HCT116 (cell line): ENCODE measurements at regions of chr9 and their contacts with region 1.

Region 1: GRCh38 chr9:129610473-129611301 is 10.2 kb downstream of the C9orf50 start:
- DNase-seq: no peak
- ATAC-seq: peak; percentile 43
- H3K4me3 ChIP-seq: peak overlapping the region; percentile 51 to 64
- H3K27ac ChIP-seq: peak overlapping the region; percentile 96
- H3K4me1 ChIP-seq: peaks cover 63 to 87% of the 10 kb centered on the region in 2 experiments
- H3K27me3 ChIP-seq: no peaks in the 10 kb centered on the region
- CTCF ChIP-seq: peak in 2 of 3 experiments; percentile 79 to 85; a peak in 4 of 6 replicates
- POLR2A ChIP-seq: no peak
- RAD21 ChIP-seq: no peak

Region 2: DNA sequence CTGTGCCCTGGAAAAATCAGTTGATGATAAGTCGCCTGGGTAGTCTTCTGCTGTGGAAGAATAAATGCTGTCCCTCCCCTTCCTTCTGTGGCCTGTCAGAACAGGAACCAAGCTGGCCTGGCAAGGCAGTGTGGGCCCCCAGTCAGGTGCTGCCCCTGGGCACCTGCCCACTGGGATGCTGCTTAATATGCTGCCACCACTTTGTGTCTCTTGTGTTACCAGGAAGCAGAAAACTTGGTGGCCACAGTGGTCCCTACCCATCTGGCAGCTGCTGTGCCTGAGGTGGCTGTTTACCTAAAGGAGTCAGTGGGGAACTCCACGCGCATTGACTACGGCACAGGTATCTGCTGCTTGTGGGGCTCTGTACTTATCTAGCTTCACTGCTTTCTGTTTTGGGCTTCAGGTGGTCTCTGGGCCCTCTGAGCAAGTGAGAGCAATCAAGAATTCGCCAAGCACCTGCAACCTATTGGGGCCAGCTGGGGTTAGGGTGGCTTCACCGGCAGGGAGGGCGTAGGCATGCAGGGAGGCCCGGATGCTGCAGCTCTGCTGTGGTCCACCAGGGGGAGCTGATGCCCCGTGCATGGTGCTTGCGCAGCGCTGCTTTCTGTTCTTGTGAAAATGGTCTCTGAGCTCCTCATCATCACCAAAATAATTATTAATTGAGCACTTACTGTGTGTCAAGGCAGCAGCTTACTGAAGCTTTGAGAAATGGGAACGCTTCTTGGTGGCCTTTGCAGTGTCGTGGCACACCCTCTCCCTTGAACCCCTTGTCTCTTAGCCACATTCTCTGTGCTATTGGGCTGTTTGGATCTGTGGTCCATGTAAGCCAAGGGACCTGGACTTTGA is 479.2 kb before region 1 on chr9:
- CTCF ChIA-PET with region 1: interaction called, 13 read pairs
- POLR2A ChIA-PET with region 1: no interaction called
- RAD21 ChIA-PET with region 1: interaction called in 1 of 2 experiments, 4 read pairs
- intact Hi-C with region 1: no loop called
- DNase-seq: peak; percentile 38
- ATAC-seq: peak; percentile 96
- H3K4me3 ChIP-seq: no peak overlapping the region
- H3K27ac ChIP-seq: peak overlapping the region; percentile 32; the same call in 1 of the 2 replicates
- H3K4me1 ChIP-seq: peaks cover 8 to 20% of the 10 kb centered on the region in 2 experiments
- H3K27me3 ChIP-seq: no peaks in the 10 kb centered on the region
- CTCF ChIP-seq: peak in 2 of 3 experiments; percentile 98 to 99; a peak in 4 of 6 replicates
- POLR2A ChIP-seq: no peak
- RAD21 ChIP-seq: no peak

Region 3: GRCh38 chr9:129406278-129407225 is 204.1 kb before region 1 on chr9:
- CTCF ChIA-PET with region 1: no interaction called
- POLR2A ChIA-PET with region 1: no interaction called
- RAD21 ChIA-PET with region 1: no interaction called
- intact Hi-C with region 1: loop called (anchors 5 kb)
- DNase-seq: peak; percentile 73
- ATAC-seq: peak; percentile 88
- H3K4me3 ChIP-seq: peak overlapping the region; percentile 47 to 62
- H3K27ac ChIP-seq: peak overlapping the region; percentile 69
- H3K4me1 ChIP-seq: peaks cover 45 to 80% of the 10 kb centered on the region in 2 experiments
- H3K27me3 ChIP-seq: no peaks in the 10 kb centered on the region
- CTCF ChIP-seq: no peak
- POLR2A ChIP-seq: peak; percentile 80
- RAD21 ChIP-seq: no peak

Region 4: GRCh38 chr9:129495534-129496325 is 115.0 kb before region 1 on chr9:
- CTCF ChIA-PET with region 1: no interaction called
- POLR2A ChIA-PET with region 1: interaction called, 34 read pairs
- RAD21 ChIA-PET with region 1: interaction called in 1 of 2 experiments, 5 read pairs
- intact Hi-C with region 1: no loop called
- DNase-seq: peak; percentile 82
- ATAC-seq: peak; percentile 71
- H3K4me3 ChIP-seq: peak overlapping the region; percentile 62 to 67
- H3K27ac ChIP-seq: peak overlapping the region; percentile 100
- H3K4me1 ChIP-seq: peaks cover 74 to 100% of the 10 kb centered on the region in 2 experiments
- H3K27me3 ChIP-seq: no peaks in the 10 kb centered on the region
- CTCF ChIP-seq: no peak
- POLR2A ChIP-seq: no peak
- RAD21 ChIP-seq: no peak

Region 5: GRCh38 chr9:129569502-129570449 is 40.9 kb before region 1 on chr9:
- CTCF ChIA-PET with region 1: no interaction called
- POLR2A ChIA-PET with region 1: interaction called, 18 read pairs
- RAD21 ChIA-PET with region 1: interaction called in 1 of 2 experiments, 4 read pairs
- intact Hi-C with region 1: loop called (anchors 2 kb)
- DNase-seq: peak; percentile 81
- ATAC-seq: peak; percentile 45
- H3K4me3 ChIP-seq: peak overlapping the region; percentile 34 to 72
- H3K27ac ChIP-seq: peak overlapping the region; percentile 100
- H3K4me1 ChIP-seq: peaks cover 50 to 68% of the 10 kb centered on the region in 2 experiments
- H3K27me3 ChIP-seq: no peaks in the 10 kb centered on the region
- CTCF ChIP-seq: peak in 2 of 3 experiments; percentile 66 to 80; a peak in 4 of 6 replicates
- POLR2A ChIP-seq: peak; percentile 24
- RAD21 ChIP-seq: no peak

Region 6: DNA sequence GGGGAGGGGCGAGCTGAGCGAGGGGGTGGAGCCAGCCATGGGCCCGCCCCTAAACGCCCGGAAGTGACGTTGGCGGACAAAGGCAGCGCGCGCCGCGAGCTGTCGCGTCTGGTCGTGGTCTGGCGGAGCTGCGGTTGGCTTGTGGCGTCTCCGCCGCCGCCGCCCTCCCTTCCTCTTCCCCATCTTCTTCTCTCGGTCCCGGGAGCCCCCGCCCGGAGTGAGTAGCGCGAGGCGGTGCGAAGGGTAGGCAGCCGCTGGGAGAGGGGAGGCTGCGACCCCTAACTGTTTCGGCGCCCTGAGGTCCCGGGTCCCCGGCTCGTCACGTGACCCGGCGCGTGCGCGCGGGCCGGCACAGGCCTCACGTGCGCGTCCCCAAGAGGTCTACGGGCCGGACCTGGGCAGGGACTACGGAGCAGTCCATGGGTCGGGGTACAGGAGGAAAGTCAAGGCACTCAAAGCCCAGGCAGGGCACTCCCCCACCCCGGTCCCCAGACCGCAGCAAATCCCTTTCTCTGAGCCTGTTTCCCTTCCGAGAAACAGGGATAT is 15.5 kb after region 1 on chr9 and contains the start of gene NTMT1:
- CTCF ChIA-PET with region 1: interaction called, 13 read pairs
- POLR2A ChIA-PET with region 1: interaction called, 5 read pairs
- RAD21 ChIA-PET with region 1: interaction called in 1 of 2 experiments, 9 read pairs
- intact Hi-C with region 1: no loop called
- DNase-seq: peak; percentile 63
- ATAC-seq: peak; percentile 84
- H3K4me3 ChIP-seq: peak within 1 kb of the TSS; percentile 88 to 99
- H3K27ac ChIP-seq: peak within 1 kb of the TSS; percentile 86
- H3K4me1 ChIP-seq: peaks cover 11 to 43% of the 10 kb centered on the region in 2 experiments
- H3K27me3 ChIP-seq: no peaks in the 10 kb centered on the region
- CTCF ChIP-seq: no peak
- POLR2A ChIP-seq: peak; percentile 67
- RAD21 ChIP-seq: no peak
- total RNA-seq, gene NTMT1: 84.8 TPM

Region 7: GRCh38 chr9:130090915-130091314 is 480.2 kb after region 1 on chr9:
- CTCF ChIA-PET with region 1: no interaction called
- POLR2A ChIA-PET with region 1: no interaction called
- RAD21 ChIA-PET with region 1: no interaction called
- intact Hi-C with region 1: no loop called
- DNase-seq: no peak
- ATAC-seq: no peak
- H3K4me3 ChIP-seq: no peak overlapping the region
- H3K27ac ChIP-seq: no peak overlapping the region
- H3K4me1 ChIP-seq: no peaks in the 10 kb centered on the region
- H3K27me3 ChIP-seq: no peaks in the 10 kb centered on the region
- CTCF ChIP-seq: peak in 2 of 3 experiments; percentile 12 to 20; a peak in 2 of 6 replicates
- POLR2A ChIP-seq: no peak
- RAD21 ChIP-seq: no peak